ENCODE measurements at regions of chr7 and their contacts with region 1.

Region 1: GRCh38 chr7:2508327-2509215 is 11.0 kb upstream of the LFNG start:
- DNase-seq: peak; percentile 56 to 95 (median 84)
- ATAC-seq: peak; percentile 67
- H3K4me3 ChIP-seq: peak overlapping the region; percentile 27 to 47
- H3K4me3 Mint-ChIP-seq: peak overlapping the region; percentile 74
- H3K27ac ChIP-seq: peak overlapping the region; percentile 84 to 88
- H3K27ac Mint-ChIP-seq: peak overlapping the region; percentile 97
- H3K4me1 ChIP-seq: peaks cover 67% of the 10 kb centered on the region
- H3K4me1 Mint-ChIP-seq: peaks cover 64% of the 10 kb centered on the region
- H3K27me3 ChIP-seq: no peaks in the 10 kb centered on the region
- H3K27me3 Mint-ChIP-seq: no peaks in the 10 kb centered on the region
- CTCF ChIP-seq: no peak

Region 2: DNA sequence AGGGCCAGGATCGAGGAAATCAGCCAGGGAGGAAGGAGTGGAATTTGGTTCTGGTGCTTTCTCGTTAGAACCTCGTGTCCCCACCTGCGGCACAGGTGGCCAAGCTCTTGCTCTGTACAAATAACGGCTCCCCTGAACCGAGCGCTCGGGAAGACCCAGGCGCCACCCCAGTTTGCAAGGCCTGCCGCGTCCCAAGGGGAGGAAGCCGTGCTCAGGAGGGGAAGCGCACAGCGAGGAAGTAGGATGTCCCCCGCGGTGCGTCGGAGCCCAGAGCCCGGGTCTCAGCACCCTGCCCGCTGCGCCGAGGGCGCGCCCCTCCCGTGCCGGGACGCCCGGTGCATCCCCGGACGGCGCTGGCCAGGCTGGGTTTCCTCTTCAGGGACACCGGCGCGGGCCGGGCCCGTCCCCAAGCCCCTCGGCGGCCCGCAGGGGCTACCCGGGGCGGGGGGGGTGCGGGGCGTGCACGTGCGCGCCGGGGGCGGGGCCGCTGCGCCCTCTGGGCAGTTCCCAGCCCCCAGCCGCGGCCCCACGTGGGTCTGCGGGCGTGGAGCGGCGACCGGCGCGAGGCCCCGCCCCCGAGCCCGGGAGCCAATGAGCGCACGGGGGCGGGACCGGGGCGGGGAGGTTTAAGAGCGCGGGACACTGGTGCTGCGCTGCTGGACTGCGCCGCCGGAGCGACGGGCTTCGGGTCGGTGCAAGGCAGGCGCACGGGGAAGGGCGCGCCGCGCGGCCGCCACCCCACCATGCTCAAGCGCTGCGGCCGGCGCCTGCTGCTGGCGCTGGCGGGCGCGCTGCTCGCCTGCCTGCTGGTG is 10.8 kb after region 1 on chr7 and contains the start of gene LFNG:
- CTCF ChIA-PET with region 1: interaction called, 5 read pairs
- POLR2A ChIA-PET with region 1: interaction called, 65 read pairs
- intact Hi-C with region 1: loop called (anchors 1 kb)
- DNase-seq: peak; percentile 58 to 94 (median 85)
- ATAC-seq: peak; percentile 63
- H3K4me3 ChIP-seq: peak within 1 kb of the TSS; percentile 98 to 100
- H3K4me3 Mint-ChIP-seq: peak within 1 kb of the TSS; percentile 96
- H3K27ac ChIP-seq: peak within 1 kb of the TSS; percentile 53 to 63
- H3K27ac Mint-ChIP-seq: peak within 1 kb of the TSS; percentile 94
- H3K4me1 ChIP-seq: peaks cover 37% of the 10 kb centered on the region
- H3K4me1 Mint-ChIP-seq: peaks cover 44% of the 10 kb centered on the region
- H3K27me3 ChIP-seq: no peaks in the 10 kb centered on the region
- H3K27me3 Mint-ChIP-seq: no peaks in the 10 kb centered on the region
- CTCF ChIP-seq: no peak
- total RNA-seq, gene LFNG: 137 to 140 TPM

Region 3: GRCh38 chr7:2529161-2530070 is 20.8 kb after region 1 on chr7:
- CTCF ChIA-PET with region 1: interaction called, 3 read pairs
- POLR2A ChIA-PET with region 1: interaction called, 91 read pairs
- intact Hi-C with region 1: loop called (anchors 1 to 2 kb)
- DNase-seq: peak in 7 of 9 experiments; percentile 47 to 88 (median 70)
- ATAC-seq: peak; percentile 26
- H3K4me3 ChIP-seq: peak overlapping the region; percentile 46 to 63
- H3K4me3 Mint-ChIP-seq: peak overlapping the region; percentile 79
- H3K27ac ChIP-seq: peak overlapping the region; percentile 71 to 91
- H3K27ac Mint-ChIP-seq: peak overlapping the region; percentile 95
- H3K4me1 ChIP-seq: peaks cover 67% of the 10 kb centered on the region
- H3K4me1 Mint-ChIP-seq: peaks cover 55% of the 10 kb centered on the region
- H3K27me3 ChIP-seq: no peaks in the 10 kb centered on the region
- H3K27me3 Mint-ChIP-seq: no peaks in the 10 kb centered on the region
- CTCF ChIP-seq: no peak

Region 4: GRCh38 chr7:2632733-2633537 is 124.4 kb after region 1 on chr7:
- CTCF ChIA-PET with region 1: no interaction called
- POLR2A ChIA-PET with region 1: interaction called, 3 read pairs
- intact Hi-C with region 1: loop called in 1 of 2 experiments (anchors 1 kb)
- DNase-seq: peak in 7 of 9 experiments; percentile 15 to 60 (median 48)
- ATAC-seq: peak; percentile 4
- H3K4me3 ChIP-seq: peak overlapping the region; percentile 69 to 79
- H3K4me3 Mint-ChIP-seq: peak overlapping the region; percentile 88
- H3K27ac ChIP-seq: peak overlapping the region; percentile 43 to 53
- H3K27ac Mint-ChIP-seq: peak overlapping the region; percentile 77
- H3K4me1 ChIP-seq: peaks cover 25% of the 10 kb centered on the region
- H3K4me1 Mint-ChIP-seq: peaks cover 14% of the 10 kb centered on the region
- H3K27me3 ChIP-seq: no peaks in the 10 kb centered on the region
- H3K27me3 Mint-ChIP-seq: no peaks in the 10 kb centered on the region
- CTCF ChIP-seq: no peak

Measured in CD8-positive, alpha-beta T cell (primary cell).